Sigmoid colon (tissue), 7 donors: ENCODE measurements at regions of chr14 and their contacts with region 1.

Region 1: DNA sequence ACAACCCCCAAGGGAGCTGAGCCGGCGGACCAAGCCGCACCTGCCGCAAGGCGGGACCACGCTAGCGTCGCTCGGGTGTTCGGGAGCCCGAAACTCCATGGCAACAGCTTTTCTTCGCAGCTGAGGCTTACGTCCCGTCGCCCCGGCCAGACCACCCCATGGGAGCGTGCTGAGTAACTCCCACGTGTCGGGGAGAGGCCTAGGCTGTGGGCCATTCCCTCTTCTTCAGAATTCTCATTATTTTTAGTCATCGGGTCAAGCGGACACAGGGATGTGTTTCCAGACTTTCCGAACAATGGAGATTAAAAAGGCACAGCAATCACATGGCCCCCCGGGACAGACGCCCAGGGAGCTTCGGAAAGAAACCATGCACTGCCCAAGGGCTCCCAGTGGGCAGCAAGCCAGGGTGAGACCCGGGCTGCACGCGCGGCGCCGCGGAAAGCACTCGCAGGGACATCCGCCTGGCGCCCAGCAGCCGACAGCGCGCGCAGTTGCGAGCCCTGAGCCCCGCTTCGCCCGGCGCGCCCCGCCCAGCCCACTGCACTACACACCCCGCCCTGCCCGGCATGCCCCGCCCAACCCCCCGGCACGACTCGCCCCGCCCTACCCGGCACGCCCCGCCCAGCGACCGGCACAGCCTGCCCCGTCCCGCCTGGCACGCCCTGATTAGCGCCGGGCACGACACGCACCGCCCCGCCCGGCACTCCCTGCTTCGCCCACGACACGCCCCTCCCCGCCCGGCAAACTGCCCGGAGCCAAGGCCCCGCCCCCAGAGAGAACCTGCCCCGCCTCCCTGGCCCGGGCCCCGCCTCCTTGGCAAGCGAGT is 422 bp upstream of the AK7 start:
- DNase-seq: peak; percentile 98
- H3K4me3 ChIP-seq: peak overlapping the region; percentile 62 to 73 (median 68)
- H3K27ac ChIP-seq: peak overlapping the region; percentile 69 to 79 (median 76)
- H3K4me1 ChIP-seq: peaks cover 0 to 15% (median 11%) of the 10 kb centered on the region in 4 donors
- H3K27me3 ChIP-seq: no peaks in the 10 kb centered on the region
- CTCF ChIP-seq: no peak
- EP300 ChIP-seq: no peak
- POLR2A ChIP-seq: no peak

Region 2: DNA sequence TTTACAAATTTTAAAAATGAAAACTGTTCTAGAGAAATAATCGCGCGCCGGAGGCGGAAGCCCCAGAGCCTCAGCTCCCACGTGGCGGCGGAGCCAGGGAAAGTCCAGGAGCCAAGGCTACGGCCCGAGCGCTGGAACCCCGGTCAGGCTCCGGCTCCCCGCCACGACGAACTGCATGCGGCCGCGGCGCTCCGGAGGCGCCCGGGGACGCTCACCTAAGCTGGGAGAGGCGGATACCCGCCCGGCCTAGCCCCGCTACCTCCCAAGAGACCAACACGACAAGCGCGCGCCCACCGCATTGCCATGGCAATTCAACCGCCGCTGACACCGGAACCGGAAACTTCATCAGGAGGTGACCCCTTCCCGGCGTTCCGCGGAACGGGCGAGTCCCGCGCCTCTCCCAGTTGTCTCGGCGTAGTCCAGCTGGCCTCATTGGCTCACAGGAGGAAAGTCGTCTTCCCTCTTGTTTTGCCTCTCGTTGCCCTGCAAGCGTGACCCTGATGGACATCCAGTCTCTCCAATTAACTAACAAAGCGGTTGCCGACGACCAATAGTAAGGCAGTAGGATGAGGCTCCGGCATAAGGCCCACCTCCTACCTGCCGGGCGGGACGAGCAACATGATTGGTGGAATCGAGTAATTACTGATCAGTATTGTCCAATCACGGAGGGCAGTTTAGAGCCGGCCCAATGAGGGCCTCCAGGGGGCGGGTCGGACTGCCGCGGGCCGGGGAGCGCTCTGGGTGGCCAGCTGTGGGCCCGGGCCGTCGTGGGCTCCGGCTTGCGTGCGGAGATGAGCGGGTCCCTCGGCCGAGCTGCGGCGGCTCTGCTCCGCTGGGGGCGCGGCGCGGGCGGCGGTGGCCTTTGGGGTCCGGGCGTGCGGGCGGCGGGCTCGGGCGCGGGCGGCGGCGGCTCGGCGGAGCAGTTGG is 856.9 kb before region 1 on chr14 and contains the start of gene GLRX5:
- intact Hi-C with region 1: no loop called
- DNase-seq: peak; percentile 100
- H3K4me3 ChIP-seq: peak within 1 kb of the TSS; percentile 85 to 100 (median 94)
- H3K27ac ChIP-seq: peak within 1 kb of the TSS; percentile 82 to 91 (median 87)
- H3K4me1 ChIP-seq: peaks cover 0 to 58% (median 50%) of the 10 kb centered on the region in 4 donors
- H3K27me3 ChIP-seq: no peaks in the 10 kb centered on the region
- CTCF ChIP-seq: no peak
- EP300 ChIP-seq: no peak
- POLR2A ChIP-seq: no peak
- total RNA-seq, gene GLRX5: 30.5 to 61.4 (median 44.3) TPM

Region 3: GRCh38 chr14:96362965-96363756 is 28.3 kb before region 1 on chr14 and contains the starts of genes ATG2B and GSKIP:
- intact Hi-C with region 1: loop called (anchors 1 kb)
- DNase-seq: peak; percentile 96
- H3K4me3 ChIP-seq: peak within 1 kb of the TSS; percentile 74 to 98 (median 98)
- H3K27ac ChIP-seq: peak within 1 kb of the TSS; percentile 90 to 98 (median 98)
- H3K4me1 ChIP-seq: peaks cover 0 to 46% (median 35%) of the 10 kb centered on the region in 4 donors
- H3K27me3 ChIP-seq: no peaks in the 10 kb centered on the region
- CTCF ChIP-seq: no peak
- EP300 ChIP-seq: no peak
- POLR2A ChIP-seq: peak; percentile 56 to 60
- total RNA-seq, gene ATG2B: 17.9 to 27.1 (median 25.0) TPM
- total RNA-seq, gene GSKIP: 13.2 to 30.7 (median 19.3) TPM